Endothelial cell of umbilical vein (primary cell): ENCODE measurements at regions of chr1 and their contacts with region 1.

Region 1: DNA sequence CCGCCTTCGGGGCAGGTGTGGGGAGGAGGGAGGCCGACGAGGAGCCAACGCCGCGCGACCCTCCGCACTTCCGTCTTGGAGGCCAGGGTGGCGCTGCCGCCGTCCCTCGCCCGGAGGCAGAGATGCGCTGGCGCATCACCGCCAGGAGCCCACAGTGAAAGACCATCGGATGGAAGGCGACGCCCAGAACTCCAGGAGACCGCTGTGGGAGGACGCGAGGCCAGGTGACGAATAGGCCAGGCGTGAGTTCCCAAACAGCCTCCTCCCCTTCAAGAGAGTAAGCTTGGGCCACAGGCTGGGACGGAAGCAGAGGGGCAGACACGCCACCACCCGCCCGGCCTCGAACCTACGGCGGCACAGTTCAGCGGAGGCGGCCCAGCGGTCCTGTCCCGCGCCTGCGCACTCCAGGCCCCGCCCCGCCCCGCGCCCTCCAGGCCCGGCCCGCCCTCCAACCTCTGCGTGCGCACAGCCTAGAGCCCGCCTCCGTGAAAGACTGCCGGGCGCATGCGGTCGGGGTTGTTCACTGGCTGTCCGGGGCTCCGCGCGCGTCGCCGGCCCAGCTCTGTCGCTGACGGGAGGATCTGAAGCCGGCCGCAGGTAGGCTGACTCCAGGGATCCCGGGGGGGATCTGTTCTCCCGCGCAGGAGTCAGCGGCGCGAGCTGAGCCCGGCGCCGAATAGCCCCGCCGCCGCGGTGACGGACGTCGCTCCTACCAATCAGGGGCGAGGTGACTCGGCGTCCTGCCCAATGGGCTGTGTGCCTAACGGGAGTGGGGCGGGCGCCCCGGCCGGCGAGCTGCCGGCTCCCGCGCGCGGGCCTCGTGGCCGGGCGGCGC is at the start of gene CTPS1:
- DNase-seq: peak; percentile 92
- H3K4me3 ChIP-seq: peak within 1 kb of the TSS; percentile 60 to 69 (median 69)
- H3K27ac ChIP-seq: peak within 1 kb of the TSS; percentile 88
- H3K4me1 ChIP-seq: peaks cover 21% of the 10 kb centered on the region
- H3K27me3 ChIP-seq: no peaks in the 10 kb centered on the region
- CTCF ChIP-seq: no peak
- POLR2A ChIP-seq: peak; percentile 85
- total RNA-seq, gene CTPS1: 63.8 and 65.8 TPM in 2 replicates

Region 2: DNA sequence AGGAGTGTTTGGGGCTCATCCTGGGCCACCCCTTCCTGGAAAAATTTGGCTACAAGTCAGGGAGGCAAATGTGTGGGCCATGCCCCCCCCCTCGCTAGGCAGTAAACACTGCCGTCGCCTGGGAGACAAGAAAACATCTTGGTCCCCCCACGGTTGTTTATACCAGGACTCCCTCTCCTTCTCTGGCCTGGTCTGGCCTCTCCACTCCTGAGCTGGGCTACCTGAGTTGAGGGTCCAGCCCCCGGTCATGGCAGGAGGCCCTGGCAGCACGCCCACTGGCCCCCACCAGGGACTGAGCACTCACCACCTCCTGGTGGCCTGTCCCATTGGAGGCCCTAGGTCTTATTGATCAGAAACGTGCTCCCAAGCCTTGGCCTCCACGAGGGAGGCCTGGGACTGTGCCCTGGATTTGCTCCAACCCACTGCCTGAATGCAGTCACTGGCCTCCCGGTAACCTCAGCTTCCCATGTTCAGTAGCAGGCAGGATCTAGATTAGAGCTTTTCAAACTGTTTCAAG is 180.0 kb before region 1 on chr1:
- CTCF ChIA-PET with region 1: no interaction called
- POLR2A ChIA-PET with region 1: no interaction called
- dilution Hi-C with region 1: no loop called
- intact Hi-C with region 1: no loop called
- DNase-seq: peak; percentile 16
- H3K4me3 ChIP-seq: no peak overlapping the region
- H3K27ac ChIP-seq: no peak overlapping the region
- H3K4me1 ChIP-seq: peaks cover 14% of the 10 kb centered on the region
- H3K27me3 ChIP-seq: no peaks in the 10 kb centered on the region
- CTCF ChIP-seq: no peak
- POLR2A ChIP-seq: no peak

Region 3: DNA sequence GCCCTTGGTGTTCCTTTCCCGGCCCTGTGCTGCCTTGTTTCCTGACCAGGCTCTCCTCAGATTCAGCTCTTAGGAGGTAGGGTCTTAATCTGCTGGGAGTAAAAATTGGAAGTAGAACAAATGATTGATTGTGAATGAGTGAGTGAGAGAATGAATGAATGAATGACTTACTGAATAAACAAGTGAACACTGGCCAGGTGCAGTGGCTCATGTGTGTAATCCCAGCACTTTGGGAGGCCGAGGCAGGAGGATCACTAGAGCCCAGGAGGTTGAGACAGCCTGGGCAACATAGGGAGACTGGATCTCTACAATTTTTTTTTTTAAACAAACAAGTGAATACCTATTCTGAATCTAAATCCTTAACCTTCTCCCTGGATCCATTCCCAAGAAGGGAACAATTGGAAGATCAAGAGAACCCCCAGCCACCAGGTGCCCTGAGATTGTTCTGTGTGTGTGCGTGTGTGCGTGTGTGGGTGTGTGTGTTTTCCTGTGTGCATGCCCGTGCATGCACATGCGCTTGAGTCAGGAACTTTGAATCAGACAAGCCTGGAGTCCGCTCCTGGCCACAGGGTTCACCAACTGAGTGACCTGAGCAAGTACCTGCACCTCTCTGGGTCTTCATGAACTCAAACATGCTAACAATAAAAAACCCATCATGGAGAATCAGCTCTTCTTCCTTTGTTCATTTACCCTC is 93.0 kb before region 1 on chr1:
- CTCF ChIA-PET with region 1: no interaction called
- POLR2A ChIA-PET with region 1: no interaction called
- dilution Hi-C with region 1: no loop called
- intact Hi-C with region 1: no loop called
- DNase-seq: no peak
- H3K4me3 ChIP-seq: no peak overlapping the region
- H3K27ac ChIP-seq: no peak overlapping the region
- H3K4me1 ChIP-seq: no peaks in the 10 kb centered on the region
- H3K27me3 ChIP-seq: no peaks in the 10 kb centered on the region
- CTCF ChIP-seq: no peak
- POLR2A ChIP-seq: no peak

Region 4: DNA sequence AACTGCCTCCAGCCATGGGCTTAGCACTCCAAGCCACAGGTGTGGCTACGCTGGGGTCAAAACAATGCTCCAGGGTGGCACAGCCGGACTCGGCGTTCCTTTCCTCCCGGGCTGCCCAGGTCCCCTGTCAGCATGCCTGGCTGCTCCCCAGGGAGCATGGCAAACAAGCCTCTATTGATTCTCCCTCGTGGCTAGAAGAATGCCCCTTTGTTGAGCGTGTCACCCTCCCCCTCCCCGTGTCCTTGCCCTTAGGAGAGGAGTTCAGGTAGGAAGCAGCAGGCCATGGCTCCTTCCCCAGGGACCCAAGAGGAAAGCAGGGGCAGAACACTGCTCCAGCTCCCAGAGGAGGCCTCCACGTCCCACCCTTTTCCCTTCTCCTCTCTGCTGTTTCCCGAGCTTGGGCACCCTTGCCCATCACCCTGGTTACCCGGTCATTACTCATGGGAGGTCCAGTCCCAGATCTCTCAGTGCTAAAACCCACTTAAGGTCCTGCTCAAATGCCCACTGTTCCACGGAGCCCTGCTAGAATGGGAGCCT is 59.9 kb before region 1 on chr1:
- CTCF ChIA-PET with region 1: no interaction called
- POLR2A ChIA-PET with region 1: no interaction called
- dilution Hi-C with region 1: no loop called
- intact Hi-C with region 1: no loop called
- DNase-seq: no peak
- H3K4me3 ChIP-seq: no peak overlapping the region
- H3K27ac ChIP-seq: no peak overlapping the region
- H3K4me1 ChIP-seq: no peaks in the 10 kb centered on the region
- H3K27me3 ChIP-seq: peaks cover 2 to 4% of the 10 kb centered on the region in 2 experiments
- CTCF ChIP-seq: no peak
- POLR2A ChIP-seq: no peak

Region 5: DNA sequence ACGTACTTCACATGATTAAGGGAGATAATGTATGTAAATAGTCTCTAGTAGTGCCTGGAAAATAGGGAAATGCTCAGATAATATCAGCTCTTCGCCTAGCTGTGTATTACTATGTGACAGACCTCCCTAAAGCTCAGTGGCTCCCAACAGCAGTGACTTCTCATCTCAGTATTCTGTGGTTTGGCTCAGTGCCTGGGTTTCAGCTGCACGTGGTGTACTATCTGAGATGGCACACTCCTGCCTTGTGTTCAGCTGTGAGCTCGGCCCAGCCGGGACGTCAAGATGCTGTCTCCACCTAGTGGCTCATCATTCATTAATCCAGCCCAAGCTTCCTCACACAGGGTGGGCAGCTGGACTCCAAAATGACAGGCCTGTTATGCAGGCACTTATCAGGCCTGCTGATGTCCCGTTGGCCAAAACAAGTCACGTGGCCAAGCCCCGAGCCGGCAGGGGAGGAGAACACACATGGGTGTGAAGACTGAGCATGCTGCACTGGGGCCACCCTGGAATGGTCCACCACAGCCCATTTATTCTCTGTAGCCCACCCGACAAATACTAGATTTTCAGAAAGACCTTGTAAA is 24.3 kb after region 1 on chr1:
- CTCF ChIA-PET with region 1: interaction called, 7 read pairs
- POLR2A ChIA-PET with region 1: no interaction called
- dilution Hi-C with region 1: no loop called
- intact Hi-C with region 1: loop called (anchors 1 kb)
- DNase-seq: peak; percentile 95
- H3K4me3 ChIP-seq: no peak overlapping the region
- H3K27ac ChIP-seq: peak overlapping the region; percentile 44
- H3K4me1 ChIP-seq: peaks cover 10% of the 10 kb centered on the region
- H3K27me3 ChIP-seq: no peaks in the 10 kb centered on the region
- CTCF ChIP-seq: peak; percentile 60 to 67
- POLR2A ChIP-seq: no peak